Activated CD4-positive, alpha-beta memory T cell treated with anti-CD3 and anti-CD28 coated beads, Interleukin-2, amount 10 ng/mL, durations not matched to agents 7 days and 5 days (primary cell): ENCODE measurements at regions of chr6 and their contacts with region 1.

Region 1: DNA sequence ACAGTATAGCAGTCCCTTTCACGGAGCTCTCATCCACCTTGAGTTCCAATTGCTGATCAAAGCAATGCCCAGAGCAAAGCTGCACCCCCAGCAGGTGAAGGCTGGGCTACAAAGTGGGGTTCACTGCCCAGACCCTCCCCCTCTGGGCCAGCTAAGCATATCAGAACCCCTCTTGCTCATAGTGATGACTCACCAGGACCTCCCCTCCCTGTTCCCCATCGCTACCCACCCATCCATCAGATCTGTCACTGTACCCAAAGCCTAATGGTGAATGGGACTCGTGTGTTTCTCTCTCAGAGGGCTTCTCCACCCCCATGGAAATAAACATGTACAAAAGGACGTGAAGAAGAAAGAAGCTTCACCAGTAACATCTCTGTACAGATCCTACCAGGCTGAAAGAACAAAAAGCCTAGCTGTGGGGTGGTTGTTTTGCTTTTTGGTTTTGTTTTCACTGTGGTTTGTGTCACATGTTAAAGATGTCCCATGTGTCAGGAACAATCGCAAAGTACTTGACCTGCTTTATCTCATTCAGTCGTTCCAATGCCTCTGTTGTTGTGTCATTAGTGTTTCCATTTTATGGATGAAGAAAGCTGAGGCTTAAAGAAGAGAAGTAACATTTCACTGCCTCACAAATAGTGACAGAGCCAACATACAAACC is 518.5 kb downstream of the CD83 start:
- DNase-seq: peak; percentile 34
- H3K4me3 Mint-ChIP-seq: peak overlapping the region; percentile 42
- H3K27ac Mint-ChIP-seq: peak overlapping the region; percentile 65
- H3K4me1 Mint-ChIP-seq: peaks cover 45% of the 10 kb centered on the region
- H3K27me3 Mint-ChIP-seq: peaks cover 21% of the 10 kb centered on the region

Region 2: GRCh38 chr6:14656078-14656521 is 20.0 kb after region 1 on chr6:
- CTCF ChIA-PET with region 1: interaction called, 3 read pairs
- POLR2A ChIA-PET with region 1: interaction called, 13 read pairs
- DNase-seq: no peak
- H3K4me3 Mint-ChIP-seq: no peak overlapping the region
- H3K27ac Mint-ChIP-seq: peak overlapping the region; percentile 73
- H3K4me1 Mint-ChIP-seq: peaks cover 30% of the 10 kb centered on the region
- H3K27me3 Mint-ChIP-seq: peaks cover 17% of the 10 kb centered on the region

Region 3: GRCh38 chr6:14703586-14703985 is 67.5 kb after region 1 on chr6:
- CTCF ChIA-PET with region 1: no interaction called
- POLR2A ChIA-PET with region 1: no interaction called
- DNase-seq: no peak
- H3K4me3 Mint-ChIP-seq: no peak overlapping the region
- H3K27ac Mint-ChIP-seq: no peak overlapping the region
- H3K4me1 Mint-ChIP-seq: peaks cover 15% of the 10 kb centered on the region
- H3K27me3 Mint-ChIP-seq: no peaks in the 10 kb centered on the region

Region 4: DNA sequence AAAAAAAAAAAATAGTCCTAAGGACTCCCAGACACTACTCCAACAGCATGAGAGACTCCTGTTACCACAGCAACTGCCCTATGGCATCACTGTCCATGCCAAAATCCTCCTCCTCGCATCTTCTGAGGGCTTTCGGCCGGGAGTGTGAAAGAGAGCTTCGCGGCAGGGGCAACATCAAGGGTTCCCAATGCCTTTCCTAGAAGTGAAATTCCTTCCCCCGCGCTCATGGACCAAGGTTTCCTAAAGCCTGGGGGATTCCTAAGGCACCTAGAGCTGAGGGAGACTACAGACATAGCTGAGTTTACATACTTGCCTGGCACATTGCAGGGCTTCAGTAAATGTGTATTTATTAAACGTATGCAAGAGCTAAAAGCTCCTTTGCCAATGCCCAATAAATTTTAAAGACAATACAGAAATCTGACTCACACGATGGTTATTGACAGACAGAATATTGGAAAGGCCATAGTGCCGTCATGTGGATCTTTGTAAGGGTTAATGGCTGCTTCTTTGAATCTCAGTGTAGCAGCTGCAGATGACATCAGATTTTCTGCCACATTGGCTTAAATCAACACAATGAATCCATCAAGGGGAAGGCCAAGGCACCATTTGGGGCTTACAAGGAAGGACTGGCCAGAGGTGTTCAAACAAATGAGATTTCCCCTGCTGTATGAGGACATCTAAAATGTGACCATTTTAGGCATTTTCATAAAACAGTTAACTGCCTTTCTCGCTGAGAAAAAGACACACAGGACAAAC is 328.6 kb after region 1 on chr6:
- CTCF ChIA-PET with region 1: no interaction called
- POLR2A ChIA-PET with region 1: no interaction called
- DNase-seq: no peak
- H3K4me3 Mint-ChIP-seq: no peak overlapping the region
- H3K27ac Mint-ChIP-seq: no peak overlapping the region
- H3K4me1 Mint-ChIP-seq: no peaks in the 10 kb centered on the region
- H3K27me3 Mint-ChIP-seq: no peaks in the 10 kb centered on the region